ENCODE measurements at regions of chr15 and their contacts with region 1.

Region 1: GRCh38 chr15:92831655-92832328 is 68.3 kb upstream of the CHD2 start:
- DNase-seq: peak; percentile 73 to 95 (median 89)
- ATAC-seq: peak; percentile 91
- H3K4me3 ChIP-seq: peak overlapping the region; percentile 33
- H3K4me3 Mint-ChIP-seq: peak overlapping the region; percentile 73
- H3K27ac ChIP-seq: peak overlapping the region; percentile 85 to 96
- H3K27ac Mint-ChIP-seq: peak overlapping the region; percentile 98
- H3K4me1 ChIP-seq: peaks cover 46% of the 10 kb centered on the region
- H3K4me1 Mint-ChIP-seq: peaks cover 57% of the 10 kb centered on the region
- H3K27me3 ChIP-seq: no peaks in the 10 kb centered on the region
- H3K27me3 Mint-ChIP-seq: no peaks in the 10 kb centered on the region
- CTCF ChIP-seq: no peak

Region 2: DNA sequence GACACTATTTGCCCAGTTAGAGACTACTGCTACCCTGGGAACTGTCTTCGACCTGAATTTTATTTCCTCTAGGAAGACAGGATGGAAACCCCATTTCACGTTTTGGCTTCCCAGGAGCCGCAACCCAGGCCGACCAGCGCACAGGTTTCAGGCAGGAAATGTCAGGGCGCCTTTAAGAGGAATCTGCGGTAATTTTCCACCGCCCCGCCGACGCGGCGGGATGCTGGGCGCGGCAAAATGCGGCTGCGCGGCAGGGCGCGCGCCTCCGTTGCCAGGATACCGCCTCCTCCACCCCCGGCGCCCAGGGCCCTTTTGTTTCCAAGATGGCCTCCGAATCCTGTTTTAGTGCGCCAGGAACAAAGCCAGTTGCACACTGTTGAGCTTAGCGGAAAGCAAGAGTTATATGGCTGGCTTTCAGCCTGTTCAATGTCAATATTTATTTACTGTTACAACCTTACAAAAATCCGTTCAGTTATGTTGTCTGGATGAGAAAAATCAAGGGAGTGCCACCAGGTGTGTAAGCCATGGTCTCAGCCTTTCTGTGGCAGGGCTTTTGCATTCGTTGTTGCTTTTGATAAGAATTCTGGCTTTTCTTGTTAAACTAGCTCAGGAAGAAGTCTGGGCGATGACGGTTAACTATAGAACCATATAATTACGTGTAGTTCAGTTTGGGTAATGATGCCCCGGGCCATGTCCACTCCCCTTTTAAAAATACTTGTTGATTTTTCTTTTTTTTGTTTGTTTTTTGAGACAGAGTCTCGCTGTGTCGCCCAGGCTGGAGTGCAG is 11.4 kb before region 1 on chr15:
- CTCF ChIA-PET with region 1: interaction called, 13 read pairs
- POLR2A ChIA-PET with region 1: interaction called, 135 read pairs
- intact Hi-C with region 1: loop called (anchors 1 to 2 kb)
- DNase-seq: peak; percentile 69 to 94 (median 82)
- ATAC-seq: peak; percentile 81
- H3K4me3 ChIP-seq: peak overlapping the region; percentile 63
- H3K4me3 Mint-ChIP-seq: peak overlapping the region; percentile 88
- H3K27ac ChIP-seq: peak overlapping the region; percentile 82 to 91
- H3K27ac Mint-ChIP-seq: peak overlapping the region; percentile 79
- H3K4me1 ChIP-seq: peaks cover 52% of the 10 kb centered on the region
- H3K4me1 Mint-ChIP-seq: peaks cover 55% of the 10 kb centered on the region
- H3K27me3 ChIP-seq: no peaks in the 10 kb centered on the region
- H3K27me3 Mint-ChIP-seq: no peaks in the 10 kb centered on the region
- CTCF ChIP-seq: no peak

Region 3: DNA sequence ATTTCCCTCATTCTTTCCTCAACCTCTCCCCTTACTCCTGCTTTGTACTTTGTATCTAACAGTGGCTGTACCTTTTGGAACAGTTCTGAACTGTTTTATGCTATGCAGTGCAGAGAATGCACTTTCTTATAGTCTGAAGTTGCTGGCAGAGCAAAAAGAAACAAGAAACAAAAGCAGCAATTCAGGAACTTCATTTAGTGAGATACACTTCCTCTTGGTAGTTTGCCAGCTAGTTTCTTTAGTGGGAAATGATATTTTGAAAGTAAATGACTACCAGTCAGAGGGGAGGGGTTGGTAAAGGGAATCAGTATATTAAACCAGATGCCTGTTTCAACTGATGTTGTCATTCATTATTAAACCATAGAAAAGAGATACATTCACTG is 13.3 kb after region 1 on chr15:
- CTCF ChIA-PET with region 1: interaction called, 6 read pairs
- POLR2A ChIA-PET with region 1: interaction called, 33 read pairs
- intact Hi-C with region 1: loop called (anchors 1 to 2 kb)
- DNase-seq: peak in 3 of 14 experiments; percentile 76 to 84 (median 81)
- ATAC-seq: peak; percentile 46
- H3K4me3 ChIP-seq: peak overlapping the region; percentile 31
- H3K4me3 Mint-ChIP-seq: peak overlapping the region; percentile 88
- H3K27ac ChIP-seq: peak overlapping the region; percentile 37 to 75
- H3K27ac Mint-ChIP-seq: peak overlapping the region; percentile 91
- H3K4me1 ChIP-seq: peaks cover 79% of the 10 kb centered on the region
- H3K4me1 Mint-ChIP-seq: peaks cover 63% of the 10 kb centered on the region
- H3K27me3 ChIP-seq: no peaks in the 10 kb centered on the region
- H3K27me3 Mint-ChIP-seq: no peaks in the 10 kb centered on the region
- CTCF ChIP-seq: no peak

Region 4: GRCh38 chr15:92891533-92892200 is 59.9 kb after region 1 on chr15:
- CTCF ChIA-PET with region 1: interaction called, 10 read pairs
- POLR2A ChIA-PET with region 1: interaction called, 9 read pairs
- intact Hi-C with region 1: no loop called
- DNase-seq: peak in 1 of 14 experiments; percentile 4
- ATAC-seq: no peak
- H3K4me3 ChIP-seq: no peak overlapping the region
- H3K4me3 Mint-ChIP-seq: peak overlapping the region; percentile 70
- H3K27ac ChIP-seq: peak overlapping the region in 1 of 2 donors; percentile 20
- H3K27ac Mint-ChIP-seq: peak overlapping the region; percentile 99
- H3K4me1 ChIP-seq: peaks cover 35% of the 10 kb centered on the region
- H3K4me1 Mint-ChIP-seq: peaks cover 93% of the 10 kb centered on the region
- H3K27me3 ChIP-seq: no peaks in the 10 kb centered on the region
- H3K27me3 Mint-ChIP-seq: no peaks in the 10 kb centered on the region
- CTCF ChIP-seq: no peak